ENCODE measurements at regions of chr15 and their contacts with region 1.

Region 1: GRCh38 chr15:78778422-78778821 is 32.8 kb downstream of the ADAMTS7 start:
- DNase-seq: no peak
- ATAC-seq: no peak
- H3K4me3 ChIP-seq: no peak overlapping the region
- H3K27ac ChIP-seq: peak overlapping the region in 7 of 10 donors; percentile 27 to 73 (median 55)
- H3K4me1 ChIP-seq: peaks cover 7 to 36% (median 23%) of the 10 kb centered on the region in 9 donors
- H3K27me3 ChIP-seq: no peaks in the 10 kb centered on the region
- CTCF ChIP-seq: no peak

Region 2: GRCh38 chr15:77974098-77974414 is 804.4 kb before region 1 on chr15:
- intact Hi-C with region 1: loop called in 3 of 10 experiments (anchors 10 kb)
- DNase-seq: peak; percentile 64 to 74
- ATAC-seq: peak; percentile 55 to 82 (median 68)
- H3K4me3 ChIP-seq: no peak overlapping the region
- H3K27ac ChIP-seq: peak overlapping the region in 8 of 10 donors; percentile 25 to 75 (median 68)
- H3K4me1 ChIP-seq: peaks cover 8 to 31% (median 21%) of the 10 kb centered on the region in 9 donors
- H3K27me3 ChIP-seq: no peaks in the 10 kb centered on the region
- CTCF ChIP-seq: no peak

Region 3: GRCh38 chr15:78790030-78790429 is 11.6 kb after region 1 on chr15:
- intact Hi-C with region 1: loop called in 1 of 10 experiments (anchors 2 kb)
- DNase-seq: peak in 1 of 2 donors; percentile 35
- ATAC-seq: peak; percentile 43 to 88 (median 72)
- H3K4me3 ChIP-seq: no peak overlapping the region
- H3K27ac ChIP-seq: peak overlapping the region in 1 of 10 donors; percentile 40
- H3K4me1 ChIP-seq: peaks cover 0 to 16% (median 0%) of the 10 kb centered on the region in 9 donors
- H3K27me3 ChIP-seq: no peaks in the 10 kb centered on the region
- CTCF ChIP-seq: peak in 1 of 9 donors; percentile 5

Region 4: GRCh38 chr15:78872972-78873792 is 94.8 kb after region 1 on chr15:
- intact Hi-C with region 1: loop called in 1 of 10 experiments (anchors 10 kb)
- DNase-seq: peak; percentile 81 to 86
- ATAC-seq: peak; percentile 72 to 84 (median 78)
- H3K4me3 ChIP-seq: peak overlapping the region; percentile 57 to 100 (median 93)
- H3K27ac ChIP-seq: peak overlapping the region; percentile 92 to 100 (median 100)
- H3K4me1 ChIP-seq: peaks cover 6 to 48% (median 41%) of the 10 kb centered on the region in 9 donors
- H3K27me3 ChIP-seq: no peaks in the 10 kb centered on the region
- CTCF ChIP-seq: peak in 8 of 9 donors; percentile 13 to 58 (median 40)

Region 5: DNA sequence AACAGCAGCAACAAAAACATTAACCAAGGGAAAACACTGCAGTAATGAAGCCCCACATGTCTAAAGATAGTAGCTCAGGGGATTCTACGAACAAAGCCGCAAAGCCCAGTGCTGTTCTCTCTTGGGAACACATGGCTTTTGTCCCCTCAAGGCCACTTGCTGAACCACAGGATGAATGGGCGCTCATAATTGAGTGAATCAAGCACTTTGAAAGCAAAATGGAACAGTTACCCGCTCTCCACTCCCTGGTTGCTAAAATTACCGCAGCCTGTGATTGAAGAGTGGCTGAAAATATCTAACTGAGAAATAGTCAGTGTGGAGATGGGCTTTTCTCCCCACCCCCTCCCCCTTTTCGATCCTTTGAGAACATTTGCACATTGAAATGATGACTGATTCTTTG is 272.6 kb after region 1 on chr15:
- intact Hi-C with region 1: no loop called
- DNase-seq: no peak
- ATAC-seq: no peak
- H3K4me3 ChIP-seq: no peak overlapping the region
- H3K27ac ChIP-seq: no peak overlapping the region
- H3K4me1 ChIP-seq: no peaks in the 10 kb centered on the region
- H3K27me3 ChIP-seq: peaks cover 0 to 5% (median 0%) of the 10 kb centered on the region in 7 donors
- CTCF ChIP-seq: no peak

Measured in heart right ventricle (tissue), 16 donors.